ENCODE measurements at regions of chr20 and their contacts with region 1.

Region 1: DNA sequence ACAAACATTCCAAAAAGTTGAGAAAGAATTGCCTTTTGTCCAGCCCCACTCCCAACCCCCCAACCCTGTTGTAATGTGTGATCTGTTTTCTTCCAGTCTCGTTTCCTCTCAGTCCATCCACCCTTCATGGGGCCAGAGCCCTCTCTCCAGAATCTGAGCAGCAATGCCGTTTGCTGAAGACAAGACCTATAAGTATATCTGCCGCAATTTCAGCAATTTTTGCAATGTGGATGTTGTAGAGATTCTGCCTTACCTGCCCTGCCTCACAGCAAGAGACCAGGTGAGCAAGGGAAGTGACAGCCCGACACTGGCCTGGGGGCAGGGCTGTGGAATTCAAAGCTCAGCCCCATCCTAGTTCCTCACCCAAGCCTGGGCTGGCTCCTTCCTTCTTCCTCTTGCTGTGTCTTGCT is 7.8 kb downstream of the MAVS start:
- DNase-seq: no peak
- ATAC-seq: no peak
- H3K4me3 Mint-ChIP-seq: no peak overlapping the region
- H3K27ac Mint-ChIP-seq: no peak overlapping the region
- H3K4me1 Mint-ChIP-seq: peaks cover 5% of the 10 kb centered on the region
- H3K27me3 Mint-ChIP-seq: no peaks in the 10 kb centered on the region
- CTCF ChIP-seq: no peak

Region 2: GRCh38 chr20:3716195-3716834 is 138.2 kb before region 1 on chr20:
- CTCF ChIA-PET with region 1: interaction called, 3 read pairs
- POLR2A ChIA-PET with region 1: no interaction called
- intact Hi-C with region 1: loop called (anchors 1 kb)
- DNase-seq: no peak
- ATAC-seq: peak; percentile 71
- H3K4me3 Mint-ChIP-seq: no peak overlapping the region
- H3K27ac Mint-ChIP-seq: no peak overlapping the region
- H3K4me1 Mint-ChIP-seq: no peaks in the 10 kb centered on the region
- H3K27me3 Mint-ChIP-seq: peaks cover 20% of the 10 kb centered on the region
- CTCF ChIP-seq: no peak

Region 3: DNA sequence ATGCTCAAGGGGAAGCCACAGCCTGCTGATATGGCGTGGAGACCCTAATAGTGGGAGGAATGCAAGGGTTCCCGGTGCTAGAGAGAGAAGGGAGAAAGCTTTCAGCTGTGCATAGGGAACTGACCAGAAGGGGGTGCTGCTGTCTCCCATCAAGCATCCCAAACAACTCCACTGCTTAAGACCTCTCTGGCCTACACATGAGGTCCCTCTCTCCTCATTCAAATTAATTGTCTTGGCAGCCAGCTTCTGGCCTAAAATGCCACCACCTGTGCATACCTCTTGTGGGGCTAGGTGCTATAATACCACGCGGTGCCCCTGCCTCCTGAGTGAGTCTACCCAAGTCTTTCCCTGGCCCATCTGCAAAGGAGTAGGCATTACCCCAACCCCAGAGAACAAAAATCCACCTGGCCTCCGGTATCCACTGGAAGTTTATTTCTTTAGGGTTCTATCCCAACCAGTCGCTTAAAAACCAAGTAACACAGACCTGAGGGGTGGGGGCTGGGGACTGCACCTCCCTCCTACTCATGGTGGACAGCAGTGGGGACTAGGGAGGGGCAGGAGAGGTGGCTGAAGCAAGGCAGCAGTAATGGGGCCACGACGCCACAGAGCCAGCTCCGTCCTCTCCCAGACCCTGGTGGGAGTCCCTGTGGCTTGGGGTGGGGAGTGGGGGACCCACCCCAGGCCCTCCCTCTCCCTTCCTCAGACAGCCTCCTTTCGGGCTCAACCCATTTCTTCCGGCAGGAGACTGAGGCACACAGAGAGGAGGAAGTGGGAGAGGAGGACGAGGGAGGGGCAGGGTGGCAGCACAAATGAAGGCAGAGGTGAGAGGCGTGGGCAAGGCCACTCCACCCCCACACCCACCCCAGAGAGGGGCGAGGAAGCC is 101.1 kb before region 1 on chr20:
- CTCF ChIA-PET with region 1: interaction called, 3 read pairs
- POLR2A ChIA-PET with region 1: no interaction called
- intact Hi-C with region 1: loop called (anchors 1 kb)
- DNase-seq: no peak
- ATAC-seq: peak; percentile 63
- H3K4me3 Mint-ChIP-seq: peak overlapping the region; percentile 12
- H3K27ac Mint-ChIP-seq: no peak overlapping the region
- H3K4me1 Mint-ChIP-seq: peaks cover 11% of the 10 kb centered on the region
- H3K27me3 Mint-ChIP-seq: no peaks in the 10 kb centered on the region
- CTCF ChIP-seq: no peak

Region 4: GRCh38 chr20:3786665-3787323 is 67.7 kb before region 1 on chr20 and contains the start of gene CENPB:
- CTCF ChIA-PET with region 1: interaction called, 46 read pairs
- POLR2A ChIA-PET with region 1: interaction called, 12 read pairs
- intact Hi-C with region 1: loop called (anchors 1 kb)
- DNase-seq: peak; percentile 96
- ATAC-seq: peak; percentile 95
- H3K4me3 Mint-ChIP-seq: peak within 1 kb of the TSS; percentile 82
- H3K27ac Mint-ChIP-seq: peak within 1 kb of the TSS; percentile 70
- H3K4me1 Mint-ChIP-seq: peaks cover 24% of the 10 kb centered on the region
- H3K27me3 Mint-ChIP-seq: no peaks in the 10 kb centered on the region
- CTCF ChIP-seq: no peak
- total RNA-seq, gene CENPB: 50.1 and 51.7 TPM in 2 replicates

Measured in activated B cell treated with CpG ODN at 0.5 μM for 24 hours (primary cell).